ENCODE measurements at regions of chr1 and their contacts with region 1.

Region 1: DNA sequence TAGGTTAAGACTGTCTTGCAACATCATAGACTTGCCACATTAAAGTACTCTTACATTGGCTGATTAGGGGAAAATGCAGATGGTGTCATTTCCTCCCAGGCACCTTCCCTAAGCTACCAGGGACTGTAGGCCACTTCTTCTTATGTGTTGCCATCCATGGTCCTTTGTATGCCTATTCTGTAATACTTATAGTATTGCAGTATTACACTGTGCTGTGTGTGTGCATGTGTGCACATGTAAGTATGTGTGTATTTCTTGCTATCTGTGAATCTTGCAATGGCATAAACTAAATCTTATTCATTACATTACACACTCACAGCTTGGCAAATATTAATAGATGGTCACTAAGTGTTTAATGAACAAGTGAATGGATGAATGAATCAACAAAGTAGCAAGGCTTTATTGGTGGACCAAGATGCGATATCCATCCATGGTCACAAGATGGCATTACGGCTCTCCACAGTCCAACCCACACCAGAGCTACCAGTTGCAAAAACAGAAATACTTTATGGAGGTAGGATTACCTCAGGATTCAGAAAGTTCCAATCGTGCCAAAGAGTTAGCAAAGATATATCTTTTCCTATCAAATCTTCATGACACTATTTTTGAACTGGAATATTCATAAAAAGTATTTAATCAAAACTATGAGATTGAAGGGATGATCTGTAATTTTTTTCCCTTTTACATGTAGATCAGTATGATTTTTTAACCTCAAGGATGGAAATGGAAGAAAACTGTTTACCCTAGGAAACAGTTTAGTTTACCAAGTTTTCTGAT is 160.2 kb downstream of the DENND1B start:
- DNase-seq: peak; percentile 22
- ATAC-seq: peak; percentile 76 to 84

Region 2: GRCh38 chr1:197638316-197638715 is 23.2 kb after region 1 on chr1:
- intact Hi-C with region 1: no loop called
- DNase-seq: no peak
- ATAC-seq: peak; percentile 65 to 75

Region 3: DNA sequence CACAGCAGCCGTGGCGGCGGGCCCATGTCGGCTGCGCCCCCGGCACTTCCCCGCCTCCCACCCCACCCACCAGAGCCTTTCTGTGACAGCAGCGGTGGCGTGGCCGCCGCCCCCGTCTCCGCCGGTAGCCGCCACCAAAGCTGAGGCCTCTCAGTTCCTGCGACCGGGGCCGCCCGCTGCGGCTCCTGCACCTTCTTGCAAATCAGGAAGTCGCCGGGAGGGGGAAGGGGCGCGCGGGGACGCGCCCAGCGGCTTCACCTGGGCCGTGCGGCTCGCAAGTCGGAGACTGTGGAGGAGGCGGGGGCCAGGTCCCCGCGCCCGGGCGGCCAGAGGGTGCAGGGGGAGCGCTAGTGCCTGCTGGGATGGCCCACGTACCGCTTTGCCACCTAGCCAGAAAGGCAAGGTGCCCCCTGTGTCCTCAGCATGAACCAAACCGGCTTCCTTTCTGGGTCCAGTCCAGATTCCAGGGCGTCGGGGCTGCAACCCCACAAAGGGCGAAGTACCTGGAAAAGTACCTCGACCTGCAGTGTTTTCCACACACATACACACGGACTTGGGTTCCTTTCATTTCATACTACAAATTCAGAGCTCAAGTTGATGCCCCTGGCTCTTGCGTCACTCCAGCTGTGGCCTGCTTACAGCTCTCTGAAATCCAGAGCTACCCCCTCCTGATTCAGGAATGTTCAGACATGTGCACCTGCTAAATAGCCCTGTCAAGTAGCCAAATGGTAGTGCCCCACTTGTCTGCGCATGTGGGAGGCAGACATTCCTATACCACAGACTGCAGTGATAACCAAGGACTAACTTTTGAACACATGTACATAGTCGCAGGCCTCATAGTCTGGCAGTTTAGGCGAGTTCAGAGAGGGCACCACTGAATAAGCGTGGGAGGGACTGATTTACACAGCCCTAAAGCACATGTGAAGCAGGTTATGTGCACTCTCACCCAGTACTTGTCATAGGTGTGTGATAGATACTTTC is 160.5 kb after region 1 on chr1 and contains the start of gene DENND1B:
- intact Hi-C with region 1: loop called in 1 of 2 experiments (anchors 10 kb)
- DNase-seq: peak; percentile 71
- ATAC-seq: peak; percentile 76 to 80
- total RNA-seq, gene DENND1B: 17.1 to 22.5 TPM

Region 4: DNA sequence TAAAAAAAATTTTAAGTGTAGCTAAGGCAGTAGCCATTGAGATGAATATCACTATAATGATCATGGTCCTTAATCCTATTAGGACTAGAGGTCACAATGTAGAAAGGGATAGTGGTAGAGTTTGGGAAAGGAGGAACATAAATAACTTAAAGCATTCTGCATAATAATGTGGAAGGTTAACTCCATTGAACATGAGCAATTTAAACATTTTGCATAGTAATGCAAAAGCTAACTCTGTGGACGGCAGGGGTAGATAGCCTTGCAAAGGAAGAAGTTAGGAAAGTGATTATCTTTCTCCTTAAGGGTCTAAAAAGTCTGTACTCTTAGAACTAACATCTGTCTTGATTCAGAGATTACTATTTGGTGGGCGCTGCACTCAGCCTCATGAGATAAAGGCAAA is 199.2 kb after region 1 on chr1:
- intact Hi-C with region 1: no loop called
- DNase-seq: no peak
- ATAC-seq: no peak

Region 5: DNA sequence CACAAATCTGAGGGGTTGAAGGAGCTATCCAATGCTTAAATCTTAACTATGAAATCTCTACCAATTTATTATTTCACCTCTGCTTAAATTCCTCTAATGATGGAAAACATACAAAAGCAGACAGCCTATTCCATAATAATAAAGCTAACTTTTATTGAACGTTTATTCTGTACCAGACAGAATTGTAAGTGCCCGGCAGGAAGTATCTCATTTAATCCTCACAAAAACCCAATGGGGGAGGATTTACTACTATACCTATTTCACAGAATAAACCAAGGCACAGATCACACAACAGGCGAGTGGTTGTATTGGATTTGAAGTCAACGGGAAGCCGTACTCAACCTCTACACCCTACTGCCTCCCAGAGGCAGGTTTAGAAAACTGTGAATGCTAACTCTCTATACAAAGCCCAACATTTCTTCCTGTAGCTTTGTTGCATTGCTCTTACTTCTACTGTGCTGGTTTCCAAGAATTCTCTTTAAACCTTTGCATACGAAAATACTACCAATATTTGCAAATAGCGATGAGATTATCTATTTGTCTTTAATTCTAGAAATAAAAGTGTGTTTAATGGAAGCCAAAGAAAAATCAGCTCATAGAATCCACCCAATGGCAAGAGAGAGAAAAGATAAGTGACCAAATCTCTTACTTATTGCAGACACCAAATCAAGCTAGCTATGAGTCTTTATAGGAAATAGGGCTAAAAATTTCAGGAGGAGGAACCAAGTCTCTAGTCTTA is 253.8 kb after region 1 on chr1:
- intact Hi-C with region 1: loop called (anchors 2 to 5 kb)
- DNase-seq: no peak
- ATAC-seq: peak; percentile 86 to 89

Region 6: DNA sequence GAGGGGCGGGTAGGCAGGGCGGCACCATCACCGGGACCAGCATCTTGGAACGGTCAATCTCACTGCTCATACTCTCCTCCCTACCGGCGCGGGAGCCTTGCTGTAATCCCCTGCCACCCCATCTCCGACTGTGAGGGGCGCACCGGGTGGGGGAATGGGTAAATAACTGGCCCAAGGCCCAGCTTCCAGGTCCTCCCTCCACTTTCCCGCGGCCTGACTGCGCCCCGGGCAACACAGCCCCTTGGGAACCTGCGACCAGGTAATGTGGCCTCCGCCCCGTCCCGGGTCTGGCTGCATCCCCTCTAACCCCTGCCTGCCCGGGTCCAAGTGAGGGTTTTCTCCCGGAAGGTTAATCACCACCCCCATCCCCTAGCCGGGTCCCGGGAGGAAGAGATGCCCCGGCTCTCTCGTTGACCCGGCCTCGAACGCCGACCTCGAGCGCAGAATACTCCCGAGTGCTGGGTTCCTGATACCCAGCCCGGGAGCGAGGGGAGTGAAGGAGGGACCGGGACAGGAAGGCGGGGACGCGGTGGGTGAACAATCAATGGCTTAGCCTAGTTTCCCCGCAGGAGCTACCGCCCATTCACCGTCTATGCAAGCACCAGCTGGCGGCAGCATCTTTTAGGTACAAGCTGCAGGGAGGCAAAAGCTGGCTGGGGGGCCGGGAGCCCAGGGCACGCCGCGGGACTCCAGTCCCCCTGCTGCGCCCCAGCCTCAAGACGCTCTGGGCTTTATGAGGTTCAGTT is 296.2 kb after region 1 on chr1:
- intact Hi-C with region 1: no loop called
- DNase-seq: no peak
- ATAC-seq: peak in 1 of 2 donors; percentile 16

Measured in left cardiac atrium (tissue), 4 donors.